ENCODE measurements at regions of chr1 and their contacts with region 1.

Region 1: GRCh38 chr1:16946646-16947045 is 24.9 kb downstream of the CROCC start:
- DNase-seq: no peak
- H3K4me3 Mint-ChIP-seq: no peak overlapping the region
- H3K27ac Mint-ChIP-seq: no peak overlapping the region
- H3K4me1 Mint-ChIP-seq: no peaks in the 10 kb centered on the region
- H3K27me3 Mint-ChIP-seq: no peaks in the 10 kb centered on the region

Region 2: GRCh38 chr1:16621300-16621658 is 325.4 kb before region 1 on chr1:
- intact Hi-C with region 1: loop called (anchors 1 kb)
- DNase-seq: no peak
- H3K4me3 Mint-ChIP-seq: no peak overlapping the region
- H3K27ac Mint-ChIP-seq: no peak overlapping the region
- H3K4me1 Mint-ChIP-seq: no peaks in the 10 kb centered on the region
- H3K27me3 Mint-ChIP-seq: no peaks in the 10 kb centered on the region

Region 3: DNA sequence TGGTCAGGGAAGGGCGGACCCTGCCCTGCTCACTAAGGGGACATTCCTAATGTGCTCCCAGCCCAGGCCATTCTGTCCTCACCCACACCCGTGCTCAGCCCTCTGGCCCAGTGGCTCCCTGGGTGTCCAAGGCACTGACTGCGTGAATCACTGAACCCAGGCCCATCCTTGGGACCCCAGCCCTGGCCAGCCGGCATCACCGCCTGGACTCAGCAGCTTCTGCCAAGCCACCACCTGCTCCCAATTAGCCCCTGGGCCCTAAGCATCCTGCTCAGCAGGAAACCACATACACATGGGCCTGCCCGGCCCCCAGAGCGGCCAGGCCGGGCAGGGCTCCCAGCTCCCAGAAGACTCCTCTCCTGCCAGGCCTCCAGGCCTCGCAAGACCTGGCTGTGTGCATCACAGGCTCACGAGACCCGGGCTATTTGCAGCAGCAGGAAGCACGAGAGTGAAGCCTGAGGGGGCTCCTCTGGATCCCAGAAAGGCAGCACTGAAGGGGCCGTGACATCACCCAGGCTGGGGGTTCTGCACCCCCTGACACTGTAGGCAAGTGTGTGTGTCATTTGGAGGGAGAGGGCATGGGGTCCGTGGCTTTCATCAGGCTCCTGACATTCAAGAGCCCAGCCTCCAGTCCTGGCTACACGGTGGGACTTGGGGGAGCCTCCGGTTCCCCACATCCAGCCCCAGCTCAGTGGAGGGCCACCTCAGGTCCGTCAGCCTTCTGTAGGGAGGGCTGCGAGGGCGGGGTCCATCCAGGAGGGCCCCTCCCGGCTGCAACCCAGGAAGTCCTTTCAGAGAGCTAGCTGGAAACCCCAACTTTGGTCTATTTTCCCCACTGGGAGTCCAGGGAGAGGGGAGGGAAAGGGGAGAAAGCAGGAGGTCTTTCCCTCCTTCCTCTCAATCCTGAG is 32.2 kb after region 1 on chr1:
- intact Hi-C with region 1: no loop called
- DNase-seq: no peak
- H3K4me3 Mint-ChIP-seq: no peak overlapping the region
- H3K27ac Mint-ChIP-seq: no peak overlapping the region
- H3K4me1 Mint-ChIP-seq: no peaks in the 10 kb centered on the region
- H3K27me3 Mint-ChIP-seq: peaks cover 33% of the 10 kb centered on the region

Region 4: DNA sequence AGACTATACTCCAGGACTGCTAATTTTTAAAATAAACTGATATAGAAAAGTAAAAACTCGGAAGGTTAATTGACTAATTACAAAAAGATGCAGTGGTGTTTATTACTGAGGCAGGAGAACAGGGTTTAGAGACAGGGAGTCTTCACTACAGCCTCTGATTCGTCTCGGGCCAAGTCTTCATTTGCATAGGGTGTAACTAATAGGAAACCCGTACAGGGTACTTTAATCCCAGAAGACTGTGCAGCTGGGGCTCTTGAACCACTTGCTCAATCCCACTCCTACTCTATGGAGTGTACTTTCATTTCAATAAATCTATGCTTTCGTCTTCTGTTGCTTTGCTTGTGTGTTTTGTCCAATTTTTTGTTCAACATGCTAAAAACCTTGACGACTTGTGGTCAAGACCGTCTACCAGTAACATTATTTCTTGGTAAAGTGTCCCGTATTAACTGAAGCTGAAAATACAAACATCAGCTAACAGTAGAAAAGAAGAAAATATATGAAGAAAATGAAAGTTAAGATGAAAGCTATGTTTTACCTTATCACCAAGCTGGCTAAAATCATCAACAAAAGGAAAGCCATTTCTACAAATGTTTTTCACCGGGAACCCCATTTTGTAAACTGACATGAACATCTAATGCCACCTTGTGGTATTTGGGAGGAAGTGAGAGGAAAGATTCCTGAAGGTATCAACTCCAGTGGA is 99.1 kb after region 1 on chr1:
- intact Hi-C with region 1: loop called (anchors 1 kb)
- DNase-seq: no peak
- H3K4me3 Mint-ChIP-seq: no peak overlapping the region
- H3K27ac Mint-ChIP-seq: peak overlapping the region; percentile 31
- H3K4me1 Mint-ChIP-seq: peaks cover 18% of the 10 kb centered on the region
- H3K27me3 Mint-ChIP-seq: no peaks in the 10 kb centered on the region

Region 5: DNA sequence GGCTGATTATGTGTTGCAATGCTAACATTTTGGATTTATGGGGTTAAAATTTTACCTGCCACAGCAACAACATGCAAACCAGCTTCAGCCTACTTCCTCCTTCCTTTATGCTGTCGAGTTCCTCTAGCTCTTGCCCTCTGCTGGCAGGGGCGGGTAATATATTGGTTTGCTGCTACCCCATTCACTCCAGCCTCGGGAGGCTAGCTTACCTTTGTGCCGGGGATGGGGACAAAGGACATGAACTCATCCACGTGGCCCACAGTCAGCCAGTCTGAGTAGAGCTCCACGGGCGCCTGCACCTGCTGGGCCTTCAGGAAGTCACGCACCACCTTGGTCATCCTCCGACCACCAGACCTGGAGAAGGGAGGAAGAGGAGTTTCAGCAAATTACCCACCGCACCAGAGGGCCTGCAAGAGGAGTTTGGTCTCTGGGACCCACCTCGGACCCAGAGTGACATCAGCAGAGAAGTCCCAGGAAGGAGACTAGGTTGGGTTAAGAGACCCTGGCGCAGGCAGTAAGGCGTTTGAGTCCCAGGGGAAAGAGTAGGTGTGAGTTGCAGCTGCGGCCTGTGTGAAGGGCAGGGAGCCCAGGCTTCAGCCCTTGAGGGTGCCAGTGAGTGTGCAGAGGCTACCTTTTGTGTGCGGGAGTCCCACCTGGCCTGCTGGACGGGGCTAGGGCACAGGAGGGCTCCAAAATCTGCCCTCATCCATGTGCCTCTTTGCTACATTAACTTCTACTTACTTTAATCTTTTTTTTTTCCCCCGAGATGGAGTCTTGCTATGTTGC is 129.0 kb after region 1 on chr1:
- intact Hi-C with region 1: loop called (anchors 1 kb)
- DNase-seq: no peak
- H3K4me3 Mint-ChIP-seq: no peak overlapping the region
- H3K27ac Mint-ChIP-seq: no peak overlapping the region
- H3K4me1 Mint-ChIP-seq: no peaks in the 10 kb centered on the region
- H3K27me3 Mint-ChIP-seq: peaks cover 5% of the 10 kb centered on the region

Region 6: DNA sequence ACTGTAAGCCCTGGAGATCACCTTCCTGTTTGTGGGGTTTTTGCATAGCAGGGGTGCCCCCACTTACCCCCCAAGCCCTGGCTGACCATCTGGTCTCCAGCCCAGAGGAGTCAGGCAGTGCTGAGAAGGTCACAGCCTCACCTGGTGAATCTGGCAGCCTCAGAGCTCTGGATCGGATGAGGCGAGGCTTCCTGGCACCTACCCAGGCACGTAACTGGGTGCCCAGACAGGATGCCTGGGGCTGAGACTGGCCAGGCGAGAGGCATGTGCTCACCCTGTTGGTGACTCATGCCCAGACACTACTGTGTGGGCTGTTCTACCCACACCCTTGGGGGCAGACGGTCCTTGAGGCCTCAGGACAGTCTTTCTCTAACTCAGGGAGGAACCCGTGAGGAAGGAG is 287.0 kb after region 1 on chr1:
- intact Hi-C with region 1: no loop called
- DNase-seq: no peak
- H3K4me3 Mint-ChIP-seq: no peak overlapping the region
- H3K27ac Mint-ChIP-seq: no peak overlapping the region
- H3K4me1 Mint-ChIP-seq: no peaks in the 10 kb centered on the region
- H3K27me3 Mint-ChIP-seq: peaks cover 12% of the 10 kb centered on the region